Spleen (tissue), 13 donors: ENCODE measurements at regions of chr3 and their contacts with region 1.

Region 1: DNA sequence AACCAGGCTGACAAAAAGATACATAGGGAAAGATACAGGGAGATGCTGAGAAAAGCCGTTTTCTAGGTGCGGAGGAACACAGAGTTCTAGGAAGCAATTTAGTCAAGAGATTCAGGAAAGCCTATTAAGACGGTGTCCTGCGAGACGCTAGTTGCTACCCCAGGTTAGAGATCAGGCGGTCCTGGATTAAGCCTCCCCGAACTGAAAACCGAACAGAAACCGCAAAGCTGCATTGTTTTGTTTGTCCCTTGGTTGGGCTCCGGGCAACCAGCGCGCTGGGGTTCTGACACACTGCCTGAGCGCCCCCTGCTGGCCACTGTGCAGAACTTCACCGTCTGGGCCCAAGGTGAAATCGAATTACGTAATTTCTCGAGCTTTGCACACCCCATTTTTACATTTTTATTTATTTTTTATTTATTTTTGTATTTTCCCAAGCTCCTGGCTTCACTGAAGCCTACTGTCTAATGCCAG is 37.3 kb upstream of the NDUFB4 start:
- DNase-seq: peak; percentile 95
- H3K4me3 ChIP-seq: peak overlapping the region in 7 of 8 donors; percentile 16 to 62 (median 35)
- H3K27ac ChIP-seq: peak overlapping the region; percentile 58 to 87 (median 82)
- H3K4me1 ChIP-seq: peaks cover 12 to 50% (median 31%) of the 10 kb centered on the region in 6 donors
- H3K27me3 ChIP-seq: peaks cover 0 to 4% (median 0%) of the 10 kb centered on the region in 7 donors
- CTCF ChIP-seq: peak; percentile 96 to 99 (median 98)
- POLR2A ChIP-seq: no peak

Region 2: GRCh38 chr3:119891944-119892721 is 666.7 kb before region 1 on chr3:
- intact Hi-C with region 1: loop called (anchors 10 kb)
- DNase-seq: no peak
- H3K4me3 ChIP-seq: no peak overlapping the region
- H3K27ac ChIP-seq: peak overlapping the region in 1 of 8 donors; percentile 6
- H3K4me1 ChIP-seq: peaks cover 0 to 13% (median 9%) of the 10 kb centered on the region in 6 donors
- H3K27me3 ChIP-seq: no peaks in the 10 kb centered on the region
- CTCF ChIP-seq: peak; percentile 9 to 66 (median 54)
- POLR2A ChIP-seq: no peak

Region 3: DNA sequence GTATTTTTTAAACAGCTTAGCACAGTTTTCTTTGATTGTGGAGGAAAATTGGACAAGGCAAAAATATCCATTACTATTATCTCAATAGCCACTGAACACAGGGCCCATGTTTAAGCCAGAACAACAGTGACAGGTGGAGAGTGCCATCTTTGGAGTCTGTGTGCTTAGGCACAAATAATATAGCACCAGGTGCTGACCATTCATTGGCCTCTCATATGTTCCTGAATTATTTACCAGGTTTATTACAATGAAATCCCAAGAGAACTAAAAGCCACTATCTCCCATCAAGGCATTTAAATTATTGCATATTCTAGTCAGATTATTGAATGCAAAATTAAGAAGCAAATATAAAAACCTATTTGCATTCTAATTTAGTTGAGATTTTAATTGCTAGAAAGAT is 313.4 kb before region 1 on chr3:
- intact Hi-C with region 1: loop called (anchors 5 kb)
- DNase-seq: no peak
- H3K4me3 ChIP-seq: no peak overlapping the region
- H3K27ac ChIP-seq: no peak overlapping the region
- H3K4me1 ChIP-seq: peaks cover 0 to 3% (median 0%) of the 10 kb centered on the region in 6 donors
- H3K27me3 ChIP-seq: peaks cover 0 to 9% (median 0%) of the 10 kb centered on the region in 7 donors
- CTCF ChIP-seq: no peak
- POLR2A ChIP-seq: no peak

Region 4: DNA sequence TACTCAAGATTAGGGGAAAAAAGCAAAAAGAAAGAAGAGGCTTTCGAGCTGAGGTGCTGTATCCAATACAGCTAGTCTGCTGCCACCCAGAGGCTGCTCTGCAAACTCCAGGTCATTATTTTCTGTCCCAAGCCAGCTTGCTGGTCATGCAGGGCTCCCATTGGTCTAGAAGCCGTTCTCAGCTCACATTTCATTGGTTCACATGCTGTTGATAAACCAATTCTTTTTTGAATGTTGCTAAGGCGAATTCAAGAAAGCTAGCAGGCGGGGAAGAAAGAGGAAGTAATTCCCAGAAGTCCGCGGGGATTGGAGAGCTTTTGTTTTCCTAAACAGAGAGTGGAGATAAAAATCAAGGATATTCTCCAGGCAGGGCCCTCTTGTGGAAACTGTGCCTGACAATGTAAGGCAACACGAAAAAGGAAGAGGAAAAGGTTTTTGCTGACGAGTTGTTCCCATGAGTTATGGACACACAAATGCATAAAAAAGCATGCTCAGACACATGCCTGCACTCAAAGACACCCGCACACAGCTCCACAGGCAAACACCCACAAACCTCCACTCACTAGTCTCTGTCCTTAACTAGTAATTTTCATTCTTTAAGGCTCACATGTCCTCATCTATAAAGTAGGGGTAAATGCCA is 141.4 kb before region 1 on chr3:
- intact Hi-C with region 1: loop called (anchors 10 kb)
- DNase-seq: peak; percentile 93
- H3K4me3 ChIP-seq: peak overlapping the region in 7 of 8 donors; percentile 28 to 68 (median 34)
- H3K27ac ChIP-seq: peak overlapping the region in 7 of 8 donors; percentile 57 to 82 (median 67)
- H3K4me1 ChIP-seq: peaks cover 13 to 62% (median 41%) of the 10 kb centered on the region in 6 donors
- H3K27me3 ChIP-seq: no peaks in the 10 kb centered on the region
- CTCF ChIP-seq: peak; percentile 79 to 94 (median 86)
- POLR2A ChIP-seq: no peak

Region 5: GRCh38 chr3:120604784-120605183 is 46.0 kb after region 1 on chr3:
- intact Hi-C with region 1: no loop called
- DNase-seq: no peak
- H3K4me3 ChIP-seq: no peak overlapping the region
- H3K27ac ChIP-seq: no peak overlapping the region
- H3K4me1 ChIP-seq: peaks cover 0 to 18% (median 12%) of the 10 kb centered on the region in 6 donors
- H3K27me3 ChIP-seq: no peaks in the 10 kb centered on the region
- CTCF ChIP-seq: no peak
- POLR2A ChIP-seq: no peak

Region 6: DNA sequence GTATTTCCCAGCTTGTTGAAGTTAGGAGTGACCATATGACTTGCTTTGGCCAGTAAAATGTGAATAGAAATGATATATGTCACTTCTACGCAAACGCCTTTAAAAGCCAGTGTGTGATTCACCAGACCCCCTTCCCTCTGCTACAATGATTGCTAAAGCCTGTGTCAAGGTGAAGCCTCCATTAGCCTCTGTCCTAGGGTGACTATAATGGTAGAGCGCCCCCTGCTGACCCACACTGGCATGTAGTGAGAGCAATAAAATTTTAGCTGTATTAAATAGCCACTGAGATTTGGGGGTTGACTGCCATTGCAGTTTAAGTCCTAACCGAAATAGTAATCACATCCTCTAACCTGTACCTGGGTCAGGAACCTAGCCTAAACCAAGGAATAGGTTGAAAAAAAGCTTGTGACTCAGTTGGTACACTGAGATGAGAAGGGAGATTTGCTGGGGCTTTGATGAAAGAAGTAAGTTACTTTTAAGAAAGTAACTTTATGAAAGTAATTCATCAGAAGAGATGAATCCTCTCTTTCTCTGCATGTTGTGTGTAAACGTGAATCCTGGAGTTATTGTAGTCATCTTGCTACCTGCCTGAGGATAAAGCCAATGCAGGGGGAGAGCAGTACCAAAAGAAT is 236.3 kb after region 1 on chr3:
- intact Hi-C with region 1: loop called (anchors 2 kb)
- DNase-seq: peak; percentile 86
- H3K4me3 ChIP-seq: no peak overlapping the region
- H3K27ac ChIP-seq: no peak overlapping the region
- H3K4me1 ChIP-seq: no peaks in the 10 kb centered on the region
- H3K27me3 ChIP-seq: no peaks in the 10 kb centered on the region
- CTCF ChIP-seq: peak; percentile 36 to 84 (median 74)
- POLR2A ChIP-seq: no peak